ENCODE measurements at regions of chr17 and their contacts with region 1.

Region 1: GRCh38 chr17:40443583-40444327 is 505 bp downstream of the IGFBP4 start:
- DNase-seq: peak; percentile 27 to 87 (median 78)

Region 2: DNA sequence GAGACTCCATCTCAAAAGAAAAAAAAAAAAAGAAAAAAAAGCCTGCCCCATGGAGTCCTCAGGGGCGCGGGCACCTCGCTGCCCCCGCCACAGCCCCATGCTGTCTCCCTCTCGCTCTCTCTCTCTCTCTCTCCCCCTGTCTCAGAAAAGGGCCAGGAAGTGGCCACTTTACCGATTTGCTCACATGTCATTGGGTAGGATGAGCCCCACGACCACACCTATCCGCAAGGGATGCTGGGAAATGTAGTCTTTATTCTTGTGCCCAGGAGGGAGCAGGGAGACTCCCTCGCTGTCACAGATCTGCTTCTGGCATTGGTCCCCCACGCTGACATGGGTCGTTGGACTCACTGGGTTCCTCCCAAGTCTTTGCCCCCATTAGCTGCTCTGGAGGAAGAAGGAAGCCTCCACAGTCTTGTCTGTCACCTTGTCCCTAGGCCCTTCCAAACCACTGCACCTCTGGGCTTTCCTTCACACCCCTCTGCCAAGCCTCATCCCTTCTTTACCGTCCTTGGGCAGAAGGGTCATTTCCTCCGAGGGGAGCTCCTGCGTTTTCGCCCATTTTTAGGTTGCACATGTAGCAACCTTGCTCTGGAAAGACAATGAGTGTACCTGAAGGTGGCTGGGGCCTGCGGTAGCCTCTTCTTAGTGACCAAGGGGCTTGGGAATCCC is 72.4 kb before region 1 on chr17:
- intact Hi-C with region 1: no loop called
- DNase-seq: no peak

Region 3: DNA sequence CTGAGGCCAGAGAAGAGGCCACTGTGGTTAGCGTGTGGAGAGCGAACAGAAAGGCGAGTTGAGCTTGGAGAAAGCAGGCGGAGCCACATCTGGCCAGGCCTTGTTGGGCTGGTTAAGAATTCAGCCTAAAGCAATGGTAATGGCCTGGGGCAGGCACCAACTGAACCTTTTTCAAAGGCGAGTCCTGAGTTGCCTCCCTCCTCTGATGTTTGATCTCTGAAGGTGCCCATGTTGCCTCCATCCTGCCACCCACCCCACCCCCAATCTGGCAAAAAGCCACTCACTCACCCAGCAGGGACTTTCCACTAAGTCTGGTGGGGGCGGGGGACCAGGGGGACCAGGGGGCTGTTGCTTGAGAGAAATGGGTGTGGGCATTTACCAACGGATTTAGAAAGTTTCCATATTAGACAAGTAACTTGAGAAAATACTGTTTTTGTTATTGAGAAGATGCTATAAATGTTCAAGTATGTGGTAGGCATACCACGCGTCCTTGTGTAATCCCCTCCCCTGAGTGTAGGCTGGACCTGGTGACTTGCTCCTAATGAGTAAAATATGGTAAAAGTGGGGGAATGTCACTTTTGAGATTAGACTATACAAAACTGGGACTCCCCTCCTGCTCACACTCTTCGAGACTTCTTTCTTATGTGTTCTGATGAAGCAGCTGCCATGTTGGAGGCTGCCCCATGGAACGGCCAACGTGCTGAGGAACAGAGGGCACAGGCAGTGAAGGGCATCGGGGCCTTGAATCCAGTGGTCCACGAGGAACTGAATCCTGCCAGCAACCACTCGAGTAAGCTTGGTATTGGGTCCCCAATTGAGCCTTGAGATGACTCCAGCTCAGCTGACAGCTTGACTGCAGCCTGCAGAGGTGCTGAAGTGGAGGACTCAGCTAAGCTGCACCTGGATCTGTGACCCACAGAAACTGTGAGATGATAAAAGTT is 87.6 kb after region 1 on chr17:
- intact Hi-C with region 1: loop called (anchors 5 kb)
- DNase-seq: peak in 2 of 42 donors; percentile 10 to 27